ENCODE measurements at regions of chr16 and their contacts with region 1.

Region 1: GRCh38 chr16:84186685-84187437 is at the start of gene TAF1C:
- DNase-seq: peak; percentile 93
- ATAC-seq: peak; percentile 99
- H3K4me3 Mint-ChIP-seq: peak within 1 kb of the TSS; percentile 92
- H3K27ac Mint-ChIP-seq: peak within 1 kb of the TSS; percentile 89
- H3K4me1 Mint-ChIP-seq: peaks cover 18% of the 10 kb centered on the region
- H3K27me3 Mint-ChIP-seq: no peaks in the 10 kb centered on the region
- CTCF ChIP-seq: peak; percentile 40
- total RNA-seq, gene TAF1C: 79.6 and 85.1 TPM in 2 replicates

Region 2: GRCh38 chr16:83807710-83808572 is 378.9 kb before region 1 on chr16 and contains the start of gene HSBP1:
- CTCF ChIA-PET with region 1: no interaction called
- POLR2A ChIA-PET with region 1: no interaction called
- intact Hi-C with region 1: loop called (anchors 2 kb)
- DNase-seq: peak; percentile 87
- ATAC-seq: peak; percentile 95
- H3K4me3 Mint-ChIP-seq: peak within 1 kb of the TSS; percentile 97
- H3K27ac Mint-ChIP-seq: peak within 1 kb of the TSS; percentile 94
- H3K4me1 Mint-ChIP-seq: peaks cover 64% of the 10 kb centered on the region
- H3K27me3 Mint-ChIP-seq: no peaks in the 10 kb centered on the region
- CTCF ChIP-seq: no peak
- total RNA-seq, gene HSBP1: 49.8 and 54.0 TPM in 2 replicates

Region 3: GRCh38 chr16:83898463-83899271 is 288.2 kb before region 1 on chr16 and contains the start of gene MLYCD:
- CTCF ChIA-PET with region 1: no interaction called
- POLR2A ChIA-PET with region 1: interaction called, 3 read pairs
- intact Hi-C with region 1: loop called (anchors 10 kb)
- DNase-seq: peak; percentile 73
- ATAC-seq: peak; percentile 95
- H3K4me3 Mint-ChIP-seq: peak within 1 kb of the TSS; percentile 93
- H3K27ac Mint-ChIP-seq: peak within 1 kb of the TSS; percentile 75
- H3K4me1 Mint-ChIP-seq: peaks cover 28% of the 10 kb centered on the region
- H3K27me3 Mint-ChIP-seq: peaks cover 10% of the 10 kb centered on the region
- CTCF ChIP-seq: no peak
- total RNA-seq, gene MLYCD: 8.7 and 10.8 TPM in 2 replicates

Region 4: DNA sequence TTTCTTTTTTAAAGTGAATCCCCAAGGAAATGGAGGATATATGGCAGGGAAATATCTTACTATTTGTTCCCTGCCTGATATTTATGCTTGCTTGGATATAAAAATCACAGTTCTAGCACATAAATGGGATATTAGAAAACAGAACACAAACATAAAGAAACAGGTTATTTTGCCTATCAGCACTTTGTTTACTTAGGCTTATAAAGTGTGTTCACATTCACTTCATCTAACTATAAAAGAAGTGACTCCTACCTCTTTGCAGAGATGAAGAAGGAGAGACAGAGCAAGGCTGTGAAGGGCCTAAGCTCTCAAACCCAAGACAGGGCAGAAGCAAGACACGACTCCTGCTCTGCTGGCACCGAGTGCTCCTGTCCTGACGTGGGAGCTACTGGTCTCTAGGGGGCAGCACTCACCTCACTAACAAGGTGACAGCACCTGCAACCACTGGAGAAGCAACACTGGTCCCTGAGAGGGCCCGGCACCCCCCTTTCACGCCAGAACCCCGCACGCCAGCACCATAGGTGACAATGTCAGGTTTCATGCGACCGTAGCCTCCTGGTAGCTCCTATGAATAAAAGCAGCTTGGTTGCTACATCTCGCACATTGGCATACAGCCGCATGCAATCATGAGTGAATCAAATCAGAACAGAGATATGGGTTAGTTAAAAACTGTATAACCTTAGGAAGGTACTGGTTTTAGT is 102.1 kb before region 1 on chr16:
- CTCF ChIA-PET with region 1: interaction called, 44 read pairs
- POLR2A ChIA-PET with region 1: interaction called, 3 read pairs
- intact Hi-C with region 1: loop called (anchors 1 kb)
- DNase-seq: peak; percentile 28
- ATAC-seq: peak; percentile 65
- H3K4me3 Mint-ChIP-seq: no peak overlapping the region
- H3K27ac Mint-ChIP-seq: no peak overlapping the region
- H3K4me1 Mint-ChIP-seq: peaks cover 45% of the 10 kb centered on the region
- H3K27me3 Mint-ChIP-seq: no peaks in the 10 kb centered on the region
- CTCF ChIP-seq: no peak

Region 5: GRCh38 chr16:84144859-84145639 is 41.8 kb before region 1 on chr16 and contains the starts of genes DNAAF1 and HSDL1:
- CTCF ChIA-PET with region 1: interaction called, 4 read pairs
- POLR2A ChIA-PET with region 1: interaction called, 5 read pairs
- intact Hi-C with region 1: loop called (anchors 1 kb)
- DNase-seq: peak; percentile 97
- ATAC-seq: peak; percentile 86
- H3K4me3 Mint-ChIP-seq: peak within 1 kb of the TSS; percentile 93
- H3K27ac Mint-ChIP-seq: peak within 1 kb of the TSS; percentile 77
- H3K4me1 Mint-ChIP-seq: peaks cover 12% of the 10 kb centered on the region
- H3K27me3 Mint-ChIP-seq: peaks cover 3% of the 10 kb centered on the region
- CTCF ChIP-seq: no peak
- total RNA-seq, gene DNAAF1: not detected in 2 replicates
- total RNA-seq, gene HSDL1: 13.1 and 15.3 TPM in 2 replicates

Region 6: DNA sequence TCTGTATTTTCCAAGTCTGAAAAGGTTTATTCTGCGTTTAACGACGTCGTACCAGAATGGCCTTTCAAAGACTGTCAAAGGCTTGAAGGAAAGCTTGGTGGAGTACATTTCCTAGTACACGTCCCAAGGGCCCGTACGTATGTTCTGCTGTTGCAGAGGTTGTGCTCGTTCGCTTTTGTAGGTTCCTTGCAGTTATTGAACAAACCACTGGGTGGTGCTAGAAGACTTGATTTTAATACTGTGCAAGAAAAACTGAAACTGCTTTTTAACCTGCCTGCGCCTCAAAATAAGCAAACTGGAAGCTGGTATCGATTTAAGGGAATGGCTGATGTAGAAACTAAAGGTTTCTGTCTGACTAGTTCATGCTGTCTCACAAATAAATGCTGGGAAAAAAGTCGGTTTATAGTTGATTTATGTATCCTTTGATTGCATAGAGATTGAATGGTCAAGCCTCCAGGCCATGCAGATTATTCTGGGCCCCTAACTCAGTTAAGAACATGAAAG is 567.5 kb after region 1 on chr16:
- CTCF ChIA-PET with region 1: no interaction called
- POLR2A ChIA-PET with region 1: no interaction called
- intact Hi-C with region 1: loop called (anchors 5 kb)
- DNase-seq: no peak
- ATAC-seq: peak; percentile 86
- H3K4me3 Mint-ChIP-seq: no peak overlapping the region
- H3K27ac Mint-ChIP-seq: no peak overlapping the region
- H3K4me1 Mint-ChIP-seq: peaks cover 67% of the 10 kb centered on the region
- H3K27me3 Mint-ChIP-seq: no peaks in the 10 kb centered on the region
- CTCF ChIP-seq: peak; percentile 77